Ascending aorta (tissue), 2 donors: ENCODE measurements at regions of chr4 and their contacts with region 1.

Region 1: DNA sequence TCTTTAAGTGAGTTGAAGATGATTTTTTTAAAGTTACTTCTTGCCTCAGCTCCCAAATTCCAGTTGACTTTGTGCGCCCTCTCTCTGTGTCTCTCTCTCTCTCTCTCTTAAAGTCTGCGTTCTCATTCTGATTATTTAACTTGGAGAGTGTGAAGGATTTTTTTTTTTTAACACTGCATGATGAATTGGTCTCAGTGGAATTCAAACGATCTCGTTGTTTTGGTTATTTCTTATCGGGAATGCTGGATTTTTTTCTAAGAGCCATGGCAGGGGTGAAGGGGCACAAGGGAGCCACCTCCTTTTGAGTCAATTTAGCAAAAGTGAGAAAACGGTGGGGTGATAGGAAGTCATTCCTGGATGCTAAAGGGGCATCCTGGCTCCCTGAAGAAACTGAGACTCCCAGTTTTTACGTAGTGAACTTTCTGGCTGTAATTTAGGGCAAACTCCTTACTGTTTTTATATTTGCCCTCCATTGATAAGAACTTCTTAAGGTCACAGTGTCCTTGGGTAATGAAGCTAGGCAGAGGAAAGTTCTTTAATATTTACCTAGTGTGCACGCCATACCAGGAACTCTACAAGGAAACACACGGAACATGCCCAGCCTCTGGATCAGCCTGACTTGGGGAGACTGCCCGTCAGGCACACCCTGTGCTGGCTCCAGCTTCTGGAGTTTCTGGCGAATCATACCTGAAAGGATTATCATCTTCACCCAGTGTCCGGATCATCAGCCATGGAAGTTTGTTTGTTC is 176.3 kb downstream of the SHROOM3 start:
- DNase-seq: peak in 1 of 2 donors; percentile 83
- H3K4me3 ChIP-seq: peak overlapping the region; percentile 28 to 41
- H3K27ac ChIP-seq: peak overlapping the region; percentile 78 to 85
- H3K4me1 ChIP-seq: peaks cover 15 to 67% of the 10 kb centered on the region in 2 donors
- H3K27me3 ChIP-seq: no peaks in the 10 kb centered on the region
- CTCF ChIP-seq: peak in 2 of 3 experiments; percentile 10 to 20

Region 2: DNA sequence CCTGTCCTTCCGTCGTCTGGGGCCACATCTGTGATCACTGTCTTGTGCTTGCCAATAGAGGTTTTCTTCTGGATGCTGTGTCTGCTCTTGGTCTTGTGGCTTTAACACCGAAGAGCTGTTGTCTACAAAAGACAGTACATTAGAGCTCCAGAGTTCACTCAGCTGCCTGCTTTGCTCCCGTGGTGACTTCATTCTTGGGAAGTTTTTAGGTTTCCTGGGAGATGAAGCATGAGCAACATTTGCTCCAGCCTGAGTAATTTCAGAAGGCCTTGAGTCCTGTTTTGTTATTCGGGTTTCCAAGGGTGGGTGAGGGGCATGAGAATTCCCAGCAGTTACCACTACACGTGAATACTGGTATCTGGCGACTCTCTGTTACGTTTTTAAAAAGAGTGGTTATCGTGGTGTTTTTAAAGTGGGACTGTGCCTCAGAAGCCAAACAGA is 12.9 kb after region 1 on chr4:
- intact Hi-C with region 1: loop called (anchors 1 kb)
- DNase-seq: peak; percentile 30 to 92
- H3K4me3 ChIP-seq: peak overlapping the region in 1 of 2 donors; percentile 34
- H3K27ac ChIP-seq: peak overlapping the region; percentile 84 to 86
- H3K4me1 ChIP-seq: peaks cover 15 to 50% of the 10 kb centered on the region in 2 donors
- H3K27me3 ChIP-seq: no peaks in the 10 kb centered on the region
- CTCF ChIP-seq: no peak

Region 3: DNA sequence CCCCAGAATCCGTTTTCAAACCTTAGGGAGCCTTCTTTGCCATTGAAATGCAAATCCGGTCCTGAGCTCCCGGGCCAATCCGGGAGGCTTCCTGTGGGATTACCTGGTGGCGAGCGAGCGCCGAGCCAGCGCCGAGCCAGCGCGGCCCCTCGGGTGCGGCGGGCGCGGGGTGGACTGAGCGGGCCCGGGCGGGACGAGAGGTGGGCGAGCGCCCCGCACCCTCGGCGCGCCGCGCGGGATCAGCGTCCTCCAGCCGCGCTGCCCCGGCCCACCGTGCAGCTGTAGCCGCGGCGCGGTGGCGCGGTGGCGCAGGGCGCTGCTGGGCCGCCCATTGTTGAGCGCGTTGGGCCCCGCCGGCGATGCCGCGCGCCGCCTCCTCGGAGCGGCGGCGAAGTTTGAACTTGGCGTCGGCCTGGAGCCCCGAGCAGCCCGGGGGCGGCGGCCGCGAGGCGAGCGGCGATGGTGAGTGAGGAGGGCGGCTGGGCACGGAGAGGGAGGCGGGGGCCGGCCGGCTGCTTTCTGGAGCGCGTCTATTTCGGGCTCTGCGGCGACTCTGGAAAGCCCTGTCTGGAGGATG is 78.0 kb after region 1 on chr4:
- intact Hi-C with region 1: loop called (anchors 5 kb)
- DNase-seq: peak in 1 of 2 donors; percentile 71
- H3K4me3 ChIP-seq: peak overlapping the region; percentile 64 to 97
- H3K27ac ChIP-seq: peak overlapping the region; percentile 89 to 98
- H3K4me1 ChIP-seq: peaks cover 0 to 28% of the 10 kb centered on the region in 2 donors
- H3K27me3 ChIP-seq: no peaks in the 10 kb centered on the region
- CTCF ChIP-seq: peak in 1 of 3 experiments; percentile 19

Region 4: GRCh38 chr4:76752861-76753501 is 141.6 kb after region 1 on chr4:
- intact Hi-C with region 1: loop called (anchors 2 kb)
- DNase-seq: peak in 1 of 2 donors; percentile 85
- H3K4me3 ChIP-seq: peak overlapping the region in 1 of 2 donors; percentile 39
- H3K27ac ChIP-seq: peak overlapping the region; percentile 76 to 79
- H3K4me1 ChIP-seq: peaks cover 13 to 40% of the 10 kb centered on the region in 2 donors
- H3K27me3 ChIP-seq: no peaks in the 10 kb centered on the region
- CTCF ChIP-seq: no peak